Activated T-helper 1 cell treated with anti-CD3 and anti-CD28 coated beads, Interleukin-12 subunit alpha, Interleukin-12 subunit beta, Interleukin-2, Interleukin-4 antibody, amounts not matched to agents 30 ng/mL and 10 ng/mL and 1 ng/mL, durations not matched to agents 14 hours and 24 hours and 36 hours (primary cell): ENCODE measurements at regions of chr17 and their contacts with region 1.

Region 1: GRCh38 chr17:51461578-51462004 is 201.2 kb downstream of the UTP18 start:
- DNase-seq: peak; percentile 48
- H3K4me3 Mint-ChIP-seq: no peak overlapping the region
- H3K27ac Mint-ChIP-seq: no peak overlapping the region
- H3K4me1 Mint-ChIP-seq: no peaks in the 10 kb centered on the region
- H3K27me3 Mint-ChIP-seq: peaks cover 4% of the 10 kb centered on the region

Region 2: GRCh38 chr17:51279183-51279582 is 182.4 kb before region 1 on chr17:
- intact Hi-C with region 1: no loop called
- DNase-seq: no peak
- H3K4me3 Mint-ChIP-seq: no peak overlapping the region
- H3K27ac Mint-ChIP-seq: peak overlapping the region; percentile 66
- H3K4me1 Mint-ChIP-seq: peaks cover 4% of the 10 kb centered on the region
- H3K27me3 Mint-ChIP-seq: no peaks in the 10 kb centered on the region

Region 3: DNA sequence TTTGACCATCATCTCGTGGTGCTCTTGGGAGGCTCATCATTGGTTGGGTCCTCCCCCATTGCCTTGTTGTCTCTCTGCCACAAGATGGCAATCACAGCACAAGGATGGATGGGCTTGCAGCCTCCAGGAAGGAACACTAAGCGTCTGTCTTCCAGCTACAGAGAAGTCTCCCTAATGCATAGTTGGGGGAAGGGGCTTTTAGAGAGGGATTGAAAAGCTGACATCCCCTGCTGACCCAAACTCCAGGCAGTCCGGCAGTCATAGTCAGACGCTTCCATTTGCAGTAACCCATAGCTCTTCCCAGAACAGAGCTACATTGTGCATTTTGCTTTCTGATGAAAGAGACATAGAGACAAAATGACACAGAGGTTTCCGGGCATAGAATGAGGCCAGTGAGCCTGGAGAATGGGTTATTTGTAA is 89.8 kb before region 1 on chr17:
- intact Hi-C with region 1: loop called (anchors 5 kb)
- DNase-seq: peak; percentile 16
- H3K4me3 Mint-ChIP-seq: no peak overlapping the region
- H3K27ac Mint-ChIP-seq: no peak overlapping the region
- H3K4me1 Mint-ChIP-seq: peaks cover 8% of the 10 kb centered on the region
- H3K27me3 Mint-ChIP-seq: peaks cover 1% of the 10 kb centered on the region

Region 4: GRCh38 chr17:51427856-51428255 is 33.7 kb before region 1 on chr17:
- intact Hi-C with region 1: loop called (anchors 5 kb)
- DNase-seq: peak; percentile 77
- H3K4me3 Mint-ChIP-seq: peak overlapping the region; percentile 60
- H3K27ac Mint-ChIP-seq: peak overlapping the region; percentile 89
- H3K4me1 Mint-ChIP-seq: peaks cover 62% of the 10 kb centered on the region
- H3K27me3 Mint-ChIP-seq: no peaks in the 10 kb centered on the region